ENCODE measurements at regions of chr7 and their contacts with region 1.

Region 1: GRCh38 chr7:70529914-70530585 is 601.9 kb upstream of the GALNT17 start:
- DNase-seq: no peak
- H3K4me3 ChIP-seq: no peak overlapping the region
- H3K27ac ChIP-seq: no peak overlapping the region
- H3K4me1 ChIP-seq: no peaks in the 10 kb centered on the region
- H3K27me3 ChIP-seq: no peaks in the 10 kb centered on the region
- CTCF ChIP-seq: no peak

Region 2: DNA sequence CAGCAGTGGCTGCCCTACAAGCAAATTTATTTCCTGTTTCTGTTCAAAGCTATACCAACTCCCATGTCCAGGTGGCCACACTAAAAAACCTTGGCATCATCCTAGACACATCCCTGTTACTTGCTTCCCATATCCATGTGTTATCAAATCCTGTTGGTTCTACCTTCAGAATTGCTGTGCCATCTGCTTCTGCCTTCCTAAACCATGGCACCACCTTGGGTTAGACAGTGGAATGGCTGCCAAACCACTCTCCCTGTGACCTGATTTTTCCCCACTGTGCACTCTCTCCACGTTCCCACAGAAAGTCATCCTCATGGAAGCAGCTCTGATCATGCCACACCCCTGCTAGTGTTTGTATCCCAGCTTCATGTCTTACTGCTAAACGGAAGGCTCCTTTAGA is 95.7 kb before region 1 on chr7:
- CTCF ChIA-PET with region 1: no interaction called
- dilution Hi-C with region 1: loop called (anchors 5 kb)
- in situ Hi-C with region 1: no loop called
- intact Hi-C with region 1: no loop called
- DNase-seq: no peak
- H3K4me3 ChIP-seq: no peak overlapping the region
- H3K27ac ChIP-seq: no peak overlapping the region
- H3K4me1 ChIP-seq: no peaks in the 10 kb centered on the region
- H3K27me3 ChIP-seq: peaks cover 3% of the 10 kb centered on the region
- CTCF ChIP-seq: peak; percentile 7 to 59

Region 3: DNA sequence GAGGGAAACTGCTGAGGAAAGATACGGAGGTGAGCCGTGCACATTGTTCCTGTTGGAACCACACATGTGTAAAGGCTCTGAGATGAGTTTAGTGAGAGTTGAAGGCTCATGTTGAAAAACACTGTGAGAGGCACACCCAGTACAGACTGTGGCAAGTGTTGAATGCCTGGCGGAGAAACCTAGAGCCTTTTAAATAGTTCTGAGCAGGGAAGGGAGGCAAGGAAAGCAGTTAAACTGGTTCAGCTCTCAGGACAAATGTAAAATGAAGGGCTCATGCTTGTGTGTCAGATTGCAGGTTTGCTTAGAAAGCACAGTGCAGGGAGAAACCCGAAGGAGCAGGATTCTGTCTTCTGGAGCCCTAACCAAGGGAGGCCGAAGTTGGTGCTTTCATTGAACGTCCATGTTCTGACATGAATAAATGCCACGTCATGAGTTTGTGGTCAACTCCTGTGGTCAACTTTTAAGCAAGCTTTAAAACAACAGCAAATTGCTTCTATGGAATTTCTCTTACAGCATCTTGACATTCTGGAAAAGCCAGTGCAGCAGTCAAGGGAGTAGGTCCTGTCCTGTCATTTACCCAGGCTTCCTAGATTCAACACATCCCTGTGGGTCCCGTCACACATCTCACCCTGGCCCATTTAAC is 49.0 kb before region 1 on chr7:
- CTCF ChIA-PET with region 1: no interaction called
- dilution Hi-C with region 1: loop called (anchors 5 kb)
- in situ Hi-C with region 1: no loop called
- intact Hi-C with region 1: no loop called
- DNase-seq: peak; percentile 96
- H3K4me3 ChIP-seq: no peak overlapping the region
- H3K27ac ChIP-seq: no peak overlapping the region
- H3K4me1 ChIP-seq: peaks cover 29% of the 10 kb centered on the region
- H3K27me3 ChIP-seq: no peaks in the 10 kb centered on the region
- CTCF ChIP-seq: no peak

Measured in mammary epithelial cell (primary cell).